ENCODE measurements at regions of chr2 and their contacts with region 1.

Region 1: GRCh38 chr2:70104231-70105111 is 17.2 kb downstream of the PCBP1 start:
- DNase-seq: peak; percentile 68
- ATAC-seq: no peak
- H3K4me3 ChIP-seq: peak overlapping the region in 3 of 5 experiments; percentile 21 to 43 (median 34)
- H3K4me3 Mint-ChIP-seq: peak overlapping the region; percentile 83
- H3K27ac ChIP-seq: peak overlapping the region; percentile 73 to 79
- H3K27ac Mint-ChIP-seq: peak overlapping the region; percentile 94
- H3K4me1 ChIP-seq: peaks cover 38 to 50% of the 10 kb centered on the region in 2 donors
- H3K4me1 Mint-ChIP-seq: peaks cover 49% of the 10 kb centered on the region
- H3K27me3 ChIP-seq: no peaks in the 10 kb centered on the region
- H3K27me3 Mint-ChIP-seq: no peaks in the 10 kb centered on the region
- CTCF ChIP-seq: no peak

Region 2: DNA sequence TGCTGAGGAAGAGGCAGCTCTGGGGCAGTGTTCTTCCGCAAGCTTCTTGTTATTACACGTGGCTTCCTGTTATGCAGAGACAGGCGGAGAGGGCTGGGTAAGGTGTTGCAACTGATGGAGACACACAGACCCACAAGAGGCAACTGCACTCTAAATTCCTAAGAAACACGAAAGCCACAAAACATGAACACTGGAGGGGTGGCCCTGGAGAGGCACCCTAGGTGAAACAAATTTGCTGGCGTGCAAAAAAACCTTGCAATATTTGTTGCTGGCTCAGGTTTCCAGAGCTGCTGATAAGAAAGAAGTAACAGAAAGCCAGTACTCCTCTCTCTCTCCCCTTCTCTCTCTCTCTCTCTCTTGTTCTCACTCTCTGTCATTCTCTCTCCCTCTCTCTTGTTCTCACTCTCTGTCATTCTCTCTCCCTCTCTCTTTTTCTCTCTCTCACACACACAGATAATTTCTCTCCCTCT is 1338.1 kb before region 1 on chr2:
- CTCF ChIA-PET with region 1: no interaction called
- POLR2A ChIA-PET with region 1: no interaction called
- intact Hi-C with region 1: no loop called
- DNase-seq: peak; percentile 74
- ATAC-seq: peak; percentile 44
- H3K4me3 ChIP-seq: peak overlapping the region in 3 of 5 experiments; percentile 9 to 48 (median 16)
- H3K4me3 Mint-ChIP-seq: peak overlapping the region; percentile 80
- H3K27ac ChIP-seq: peak overlapping the region; percentile 93 to 99
- H3K27ac Mint-ChIP-seq: peak overlapping the region; percentile 98
- H3K4me1 ChIP-seq: peaks cover 97 to 100% of the 10 kb centered on the region in 2 donors
- H3K4me1 Mint-ChIP-seq: peaks cover 94% of the 10 kb centered on the region
- H3K27me3 ChIP-seq: no peaks in the 10 kb centered on the region
- H3K27me3 Mint-ChIP-seq: no peaks in the 10 kb centered on the region
- CTCF ChIP-seq: no peak

Region 3: GRCh38 chr2:70115646-70116442 is 11.4 kb after region 1 on chr2:
- CTCF ChIA-PET with region 1: interaction called, 17 read pairs
- POLR2A ChIA-PET with region 1: interaction called, 95 read pairs
- intact Hi-C with region 1: no loop called
- DNase-seq: peak; percentile 57
- ATAC-seq: peak; percentile 66
- H3K4me3 ChIP-seq: peak overlapping the region in 2 of 5 experiments; percentile 8 to 16
- H3K4me3 Mint-ChIP-seq: peak overlapping the region; percentile 65
- H3K27ac ChIP-seq: peak overlapping the region in 1 of 2 donors; percentile 46
- H3K27ac Mint-ChIP-seq: peak overlapping the region; percentile 89
- H3K4me1 ChIP-seq: peaks cover 23 to 44% of the 10 kb centered on the region in 2 donors
- H3K4me1 Mint-ChIP-seq: peaks cover 38% of the 10 kb centered on the region
- H3K27me3 ChIP-seq: no peaks in the 10 kb centered on the region
- H3K27me3 Mint-ChIP-seq: no peaks in the 10 kb centered on the region
- CTCF ChIP-seq: no peak

Region 4: GRCh38 chr2:70124983-70125480 is 20.6 kb after region 1 on chr2:
- CTCF ChIA-PET with region 1: interaction called, 17 read pairs
- POLR2A ChIA-PET with region 1: interaction called, 95 read pairs
- intact Hi-C with region 1: loop called (anchors 1 kb)
- DNase-seq: peak; percentile 95
- ATAC-seq: peak; percentile 66
- H3K4me3 ChIP-seq: peak overlapping the region; percentile 32 to 99 (median 71)
- H3K4me3 Mint-ChIP-seq: peak overlapping the region; percentile 95
- H3K27ac ChIP-seq: peak overlapping the region; percentile 100
- H3K27ac Mint-ChIP-seq: peak overlapping the region; percentile 100
- H3K4me1 ChIP-seq: peaks cover 63 to 71% of the 10 kb centered on the region in 2 donors
- H3K4me1 Mint-ChIP-seq: peaks cover 65% of the 10 kb centered on the region
- H3K27me3 ChIP-seq: no peaks in the 10 kb centered on the region
- H3K27me3 Mint-ChIP-seq: no peaks in the 10 kb centered on the region
- CTCF ChIP-seq: no peak

Region 5: GRCh38 chr2:70132244-70133126 is 28.0 kb after region 1 on chr2:
- CTCF ChIA-PET with region 1: interaction called, 5 read pairs
- POLR2A ChIA-PET with region 1: interaction called, 28 read pairs
- intact Hi-C with region 1: no loop called
- DNase-seq: peak; percentile 77
- ATAC-seq: peak; percentile 74
- H3K4me3 ChIP-seq: peak overlapping the region; percentile 35 to 62 (median 53)
- H3K4me3 Mint-ChIP-seq: peak overlapping the region; percentile 87
- H3K27ac ChIP-seq: peak overlapping the region; percentile 80 to 87
- H3K27ac Mint-ChIP-seq: peak overlapping the region; percentile 96
- H3K4me1 ChIP-seq: peaks cover 52 to 61% of the 10 kb centered on the region in 2 donors
- H3K4me1 Mint-ChIP-seq: peaks cover 59% of the 10 kb centered on the region
- H3K27me3 ChIP-seq: no peaks in the 10 kb centered on the region
- H3K27me3 Mint-ChIP-seq: no peaks in the 10 kb centered on the region
- CTCF ChIP-seq: no peak

Region 6: GRCh38 chr2:70214953-70215549 is 110.6 kb after region 1 on chr2:
- CTCF ChIA-PET with region 1: no interaction called
- POLR2A ChIA-PET with region 1: no interaction called
- intact Hi-C with region 1: no loop called
- DNase-seq: no peak
- ATAC-seq: no peak
- H3K4me3 ChIP-seq: no peak overlapping the region
- H3K4me3 Mint-ChIP-seq: no peak overlapping the region
- H3K27ac ChIP-seq: no peak overlapping the region
- H3K27ac Mint-ChIP-seq: no peak overlapping the region
- H3K4me1 ChIP-seq: no peaks in the 10 kb centered on the region
- H3K4me1 Mint-ChIP-seq: no peaks in the 10 kb centered on the region
- H3K27me3 ChIP-seq: no peaks in the 10 kb centered on the region
- H3K27me3 Mint-ChIP-seq: no peaks in the 10 kb centered on the region
- CTCF ChIP-seq: no peak

Region 7: DNA sequence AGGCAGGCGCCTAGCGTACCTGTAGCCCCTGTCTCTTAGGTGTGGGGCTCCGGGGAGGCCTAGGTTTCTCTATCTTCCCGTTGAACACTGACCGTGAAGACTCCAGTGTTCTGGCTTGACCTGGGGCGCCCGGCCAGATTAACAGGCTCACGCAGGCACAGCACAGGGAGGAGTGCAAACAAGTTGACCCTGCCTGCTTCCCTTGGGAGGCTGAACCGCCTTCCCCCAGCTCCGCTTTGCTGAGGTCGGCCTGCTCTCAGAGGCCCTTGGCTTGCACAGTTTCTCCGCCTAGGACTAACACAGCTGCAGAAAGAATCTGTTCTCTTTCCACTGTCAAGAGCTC is 154.0 kb after region 1 on chr2:
- CTCF ChIA-PET with region 1: no interaction called
- POLR2A ChIA-PET with region 1: interaction called, 10 read pairs
- intact Hi-C with region 1: no loop called
- DNase-seq: no peak
- ATAC-seq: no peak
- H3K4me3 ChIP-seq: peak overlapping the region in 4 of 5 experiments; percentile 54 to 81 (median 70)
- H3K4me3 Mint-ChIP-seq: peak overlapping the region; percentile 97
- H3K27ac ChIP-seq: peak overlapping the region in 1 of 2 donors; percentile 14
- H3K27ac Mint-ChIP-seq: peak overlapping the region; percentile 90
- H3K4me1 ChIP-seq: peaks cover 6 to 12% of the 10 kb centered on the region in 2 donors
- H3K4me1 Mint-ChIP-seq: peaks cover 18% of the 10 kb centered on the region
- H3K27me3 ChIP-seq: no peaks in the 10 kb centered on the region
- H3K27me3 Mint-ChIP-seq: no peaks in the 10 kb centered on the region
- CTCF ChIP-seq: no peak